Sciatic nerve (tissue), 2 donors: ENCODE measurements at regions of chr9 and their contacts with region 1.

Region 1: DNA sequence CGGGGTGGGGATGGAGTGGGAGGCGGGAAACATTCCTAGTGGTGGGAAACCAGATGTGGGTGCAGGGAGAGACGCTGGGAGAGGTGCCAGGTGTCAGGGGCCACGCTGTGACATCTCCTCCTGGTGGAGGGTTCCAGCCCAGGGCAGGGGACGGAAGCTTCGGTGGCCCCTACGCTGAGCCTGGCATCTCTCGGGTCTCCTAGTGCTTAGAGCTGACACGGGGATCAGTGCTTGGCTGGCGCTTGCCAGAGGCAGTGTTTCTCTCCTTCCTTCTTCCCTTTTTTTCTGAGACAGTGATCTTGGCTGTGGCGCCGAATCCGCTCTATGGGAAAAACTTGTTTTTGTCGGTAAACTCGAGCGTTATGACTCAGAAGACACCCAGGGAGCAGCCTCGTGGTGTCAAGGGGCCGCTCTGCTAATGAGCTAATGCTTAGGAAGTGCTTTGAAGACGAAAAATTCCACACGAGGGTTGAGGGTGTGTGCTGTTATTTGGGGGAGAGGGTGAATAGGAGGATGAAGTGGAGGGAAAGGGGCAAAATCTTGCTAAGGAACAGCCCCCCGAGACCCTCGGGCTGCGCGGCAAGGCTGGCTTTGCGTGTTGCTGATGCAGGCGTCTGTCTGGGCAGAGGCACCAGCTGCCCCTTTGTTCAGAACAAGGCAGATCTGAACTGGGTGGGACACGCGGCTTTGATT is 20.4 kb upstream of the IER5L start:
- DNase-seq: peak; percentile 80
- ATAC-seq: peak; percentile 73

Region 2: GRCh38 chr9:129317179-129318011 is 118.9 kb after region 1 on chr9:
- intact Hi-C with region 1: loop called (anchors 10 kb)
- DNase-seq: peak; percentile 70
- ATAC-seq: no peak